Tibial artery (tissue), 4 donors: ENCODE measurements at regions of chr3 and their contacts with region 1.

Region 1: DNA sequence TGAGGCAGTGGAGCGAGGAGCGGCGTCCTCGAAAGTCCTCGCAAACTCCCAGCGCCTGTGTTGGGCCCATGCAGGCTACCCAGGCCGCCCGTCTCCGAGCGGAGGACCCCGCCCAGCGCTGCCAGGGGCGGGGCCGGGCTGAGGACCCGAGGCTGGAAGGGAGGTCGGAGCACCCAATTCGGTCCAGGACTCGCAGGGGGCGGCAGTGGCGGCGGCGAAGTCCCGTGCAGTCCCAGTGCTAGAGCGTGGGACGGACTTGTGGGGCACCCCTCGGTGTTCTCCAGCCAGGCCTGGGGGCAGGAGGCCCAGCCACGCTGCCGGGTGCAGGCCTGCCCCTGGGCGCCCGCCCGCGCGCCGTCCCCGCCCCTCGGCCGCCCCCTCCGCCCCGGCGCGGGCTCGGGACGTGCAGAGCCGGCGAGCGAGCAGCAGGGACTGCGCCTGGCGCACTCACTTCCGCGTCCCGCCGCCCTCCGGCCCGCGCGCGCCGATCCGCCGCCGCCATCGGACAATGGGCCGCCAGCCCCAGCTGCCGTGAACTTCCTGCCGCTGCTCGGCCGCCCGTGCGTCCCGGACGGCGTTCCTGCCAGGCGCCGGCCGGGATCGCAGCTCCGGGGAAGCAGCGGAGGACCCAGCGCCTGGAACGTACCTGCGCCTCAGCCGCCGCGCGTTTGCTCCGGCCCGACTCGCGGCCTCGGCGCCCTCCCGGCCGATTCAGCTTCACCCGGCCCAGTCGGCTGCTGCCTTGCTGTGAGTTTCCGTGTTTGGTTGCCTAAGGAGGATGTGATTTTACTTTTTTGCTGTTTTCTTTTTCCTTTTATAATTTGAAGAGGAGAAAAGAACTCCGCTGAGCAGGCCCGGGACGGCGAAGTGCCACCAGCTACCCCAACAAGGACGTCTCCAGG is 592 bp upstream of the LIMD1 start:
- DNase-seq: peak; percentile 50 to 86
- H3K4me3 ChIP-seq: peak overlapping the region; percentile 74 to 86
- H3K27ac ChIP-seq: peak overlapping the region; percentile 89 to 95
- H3K4me1 ChIP-seq: peaks cover 5 to 52% (median 44%) of the 10 kb centered on the region in 4 donors
- H3K27me3 ChIP-seq: no peaks in the 10 kb centered on the region
- CTCF ChIP-seq: no peak

Region 2: GRCh38 chr3:45507820-45508317 is 86.1 kb before region 1 on chr3:
- intact Hi-C with region 1: loop called (anchors 5 kb)
- DNase-seq: no peak
- H3K4me3 ChIP-seq: no peak overlapping the region
- H3K27ac ChIP-seq: no peak overlapping the region
- H3K4me1 ChIP-seq: no peaks in the 10 kb centered on the region
- H3K27me3 ChIP-seq: no peaks in the 10 kb centered on the region
- CTCF ChIP-seq: no peak

Region 3: GRCh38 chr3:45986303-45986982 is 392.5 kb after region 1 on chr3:
- intact Hi-C with region 1: loop called (anchors 10 kb)
- DNase-seq: peak; percentile 51 to 82
- H3K4me3 ChIP-seq: no peak overlapping the region
- H3K27ac ChIP-seq: peak overlapping the region; percentile 99
- H3K4me1 ChIP-seq: peaks cover 0 to 91% (median 77%) of the 10 kb centered on the region in 4 donors
- H3K27me3 ChIP-seq: no peaks in the 10 kb centered on the region
- CTCF ChIP-seq: no peak